ENCODE measurements at regions of chrX and their contacts with region 1.

Region 1: GRCh38 chrX:129637217-129638109 is 17.3 kb downstream of the APLN start:
- DNase-seq: peak; percentile 76
- H3K4me3 Mint-ChIP-seq: no peak overlapping the region
- H3K27ac Mint-ChIP-seq: no peak overlapping the region
- H3K4me1 Mint-ChIP-seq: no peaks in the 10 kb centered on the region
- H3K27me3 Mint-ChIP-seq: peaks cover 30% of the 10 kb centered on the region
- CTCF ChIP-seq: peak; percentile 96

Region 2: GRCh38 chrX:129600981-129601424 is 36.5 kb before region 1 on chrX:
- CTCF ChIA-PET with region 1: interaction called, 10 read pairs
- POLR2A ChIA-PET with region 1: no interaction called
- intact Hi-C with region 1: no loop called
- DNase-seq: peak; percentile 34
- H3K4me3 Mint-ChIP-seq: no peak overlapping the region
- H3K27ac Mint-ChIP-seq: no peak overlapping the region
- H3K4me1 Mint-ChIP-seq: peaks cover 7% of the 10 kb centered on the region
- H3K27me3 Mint-ChIP-seq: peaks cover 28% of the 10 kb centered on the region
- CTCF ChIP-seq: peak; percentile 71

Region 3: DNA sequence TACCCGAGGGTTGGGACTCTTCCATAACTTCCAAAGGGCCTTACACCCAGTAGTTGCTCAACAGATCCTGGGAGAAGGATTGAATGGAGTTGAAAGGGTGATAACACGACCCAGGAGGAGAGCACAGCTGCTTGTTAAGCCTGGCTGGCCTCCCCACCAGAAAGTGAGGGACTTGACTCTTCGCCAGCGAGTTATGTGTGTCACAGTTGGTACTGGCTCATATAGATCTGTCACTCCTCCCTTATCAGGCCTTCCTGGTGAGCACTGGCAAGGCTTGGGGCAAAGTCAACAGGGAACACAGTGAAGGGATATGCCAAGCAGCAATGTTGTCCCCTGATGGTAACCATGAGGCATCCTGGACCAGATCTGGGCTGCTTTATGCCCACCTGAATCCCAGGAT is 18.5 kb before region 1 on chrX:
- CTCF ChIA-PET with region 1: interaction called, 13 read pairs
- POLR2A ChIA-PET with region 1: no interaction called
- intact Hi-C with region 1: no loop called
- DNase-seq: no peak
- H3K4me3 Mint-ChIP-seq: no peak overlapping the region
- H3K27ac Mint-ChIP-seq: no peak overlapping the region
- H3K4me1 Mint-ChIP-seq: no peaks in the 10 kb centered on the region
- H3K27me3 Mint-ChIP-seq: peaks cover 12% of the 10 kb centered on the region
- CTCF ChIP-seq: no peak

Region 4: DNA sequence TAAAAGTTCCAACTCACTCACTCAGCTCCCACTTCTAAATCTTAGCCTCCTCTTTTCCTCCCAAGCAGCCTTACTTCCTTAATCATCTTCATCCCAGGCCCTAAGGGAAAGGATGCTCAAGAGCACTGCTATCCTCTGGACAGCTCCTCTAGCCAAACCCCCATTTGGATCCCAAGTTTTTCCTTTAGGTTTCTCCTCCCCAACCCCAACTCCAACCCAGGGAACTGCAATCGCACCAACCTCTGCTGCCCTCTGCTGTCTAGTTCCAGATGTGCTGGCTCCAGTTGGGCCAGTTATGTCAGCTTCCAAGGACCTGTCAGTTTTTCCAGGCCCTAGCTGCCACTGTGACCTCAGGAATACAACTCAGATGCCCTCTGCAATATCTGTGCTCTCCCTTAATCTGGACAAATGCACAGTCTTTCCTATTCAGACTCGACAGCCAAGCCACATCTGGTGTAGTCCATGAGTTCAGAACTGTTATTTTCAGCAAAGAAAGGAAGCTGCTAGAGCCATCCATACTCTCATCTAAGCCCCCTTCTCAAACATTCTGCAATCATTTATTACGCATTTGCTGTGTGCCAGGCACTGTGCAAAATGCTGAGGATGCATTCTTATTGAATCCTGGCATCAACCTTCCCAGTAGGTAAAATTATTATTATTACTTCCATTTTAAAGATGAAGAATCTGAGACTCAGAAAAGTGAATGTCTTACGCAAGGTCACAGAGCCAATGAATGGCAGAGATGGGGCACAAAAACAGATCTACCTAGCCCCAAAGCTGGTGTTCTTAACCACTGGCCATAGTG is 89.0 kb after region 1 on chrX:
- CTCF ChIA-PET with region 1: interaction called, 126 read pairs
- POLR2A ChIA-PET with region 1: interaction called, 3 read pairs
- intact Hi-C with region 1: loop called (anchors 1 kb)
- DNase-seq: peak; percentile 62
- H3K4me3 Mint-ChIP-seq: no peak overlapping the region
- H3K27ac Mint-ChIP-seq: no peak overlapping the region
- H3K4me1 Mint-ChIP-seq: no peaks in the 10 kb centered on the region
- H3K27me3 Mint-ChIP-seq: peaks cover 73% of the 10 kb centered on the region
- CTCF ChIP-seq: peak; percentile 75

Region 5: GRCh38 chrX:130060122-130061069 is 422.9 kb after region 1 on chrX:
- CTCF ChIA-PET with region 1: interaction called, 15 read pairs
- POLR2A ChIA-PET with region 1: no interaction called
- intact Hi-C with region 1: loop called (anchors 1 kb)
- DNase-seq: peak; percentile 67
- H3K4me3 Mint-ChIP-seq: peak overlapping the region; percentile 65
- H3K27ac Mint-ChIP-seq: peak overlapping the region; percentile 85
- H3K4me1 Mint-ChIP-seq: no peaks in the 10 kb centered on the region
- H3K27me3 Mint-ChIP-seq: peaks cover 26% of the 10 kb centered on the region
- CTCF ChIP-seq: peak; percentile 78

Measured in MCF 10A (cell line).